Activated CD4-positive, alpha-beta T cell treated with anti-CD3 and anti-CD28 coated beads for 36 hours (primary cell): ENCODE measurements at regions of chr12 and their contacts with region 1.

Region 1: DNA sequence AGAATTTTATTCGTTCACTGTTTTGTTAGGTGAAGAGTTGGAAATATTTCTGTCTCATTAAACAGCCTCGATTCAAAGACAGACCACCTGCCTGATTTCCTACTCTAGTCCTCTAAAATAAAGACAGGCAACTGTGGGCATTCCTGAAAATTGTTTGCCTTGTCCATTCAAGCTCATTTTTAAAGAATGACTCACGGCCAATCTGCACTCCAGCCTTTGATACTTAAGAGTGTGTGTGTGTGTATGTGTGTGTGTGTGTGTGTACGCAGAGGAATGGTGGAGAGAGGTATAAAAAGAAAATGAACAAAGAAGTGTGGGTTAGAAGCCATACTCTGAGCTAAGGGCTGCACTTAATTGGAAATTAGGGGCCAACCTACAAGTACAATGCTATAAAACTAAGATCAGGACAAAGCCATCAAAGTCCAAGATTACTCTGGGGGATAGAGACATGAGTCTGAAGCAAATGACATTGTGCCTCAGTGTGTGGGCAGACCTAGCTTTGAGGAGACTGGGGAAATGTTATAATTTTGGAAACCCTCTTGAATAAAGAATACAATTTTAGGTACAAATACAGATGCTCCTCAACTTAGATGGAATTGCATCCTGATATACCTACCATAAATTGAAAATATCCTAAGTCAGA is 45.6 kb upstream of the SOCS2 start:
- DNase-seq: no peak
- ATAC-seq: no peak
- H3K4me3 Mint-ChIP-seq: no peak overlapping the region
- H3K27ac Mint-ChIP-seq: no peak overlapping the region
- H3K4me1 Mint-ChIP-seq: no peaks in the 10 kb centered on the region
- H3K27me3 Mint-ChIP-seq: peaks cover 8% of the 10 kb centered on the region

Region 2: GRCh38 chr12:93653079-93653478 is 126.2 kb after region 1 on chr12:
- CTCF ChIA-PET with region 1: no interaction called
- POLR2A ChIA-PET with region 1: interaction called, 10 read pairs
- intact Hi-C with region 1: no loop called
- DNase-seq: no peak
- ATAC-seq: no peak
- H3K4me3 Mint-ChIP-seq: no peak overlapping the region
- H3K27ac Mint-ChIP-seq: no peak overlapping the region
- H3K4me1 Mint-ChIP-seq: no peaks in the 10 kb centered on the region
- H3K27me3 Mint-ChIP-seq: peaks cover 2% of the 10 kb centered on the region